Left colon (tissue), 2 donors: ENCODE measurements at regions of chr15 and their contacts with region 1.

Region 1: DNA sequence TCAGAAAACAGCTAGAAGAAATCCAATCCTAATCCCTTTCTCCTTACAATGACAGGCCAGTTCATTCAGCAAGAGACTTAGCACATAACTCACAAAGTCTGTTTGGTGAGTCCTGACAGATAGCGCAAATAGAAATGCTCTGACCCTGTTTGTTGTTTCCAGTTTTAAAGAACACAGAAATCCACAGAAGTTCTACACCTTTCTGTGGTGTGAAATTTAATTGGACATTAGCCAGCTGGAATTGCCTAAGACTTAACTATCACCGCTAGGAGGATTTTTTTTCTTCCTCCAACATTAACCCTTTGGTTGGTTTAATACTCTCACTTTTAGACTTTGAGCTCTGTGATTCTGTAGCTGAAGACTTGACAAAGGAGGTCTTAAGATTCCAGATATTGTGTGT is 30.8 kb downstream of the HDC start:
- DNase-seq: no peak
- ATAC-seq: peak; percentile 17

Region 2: DNA sequence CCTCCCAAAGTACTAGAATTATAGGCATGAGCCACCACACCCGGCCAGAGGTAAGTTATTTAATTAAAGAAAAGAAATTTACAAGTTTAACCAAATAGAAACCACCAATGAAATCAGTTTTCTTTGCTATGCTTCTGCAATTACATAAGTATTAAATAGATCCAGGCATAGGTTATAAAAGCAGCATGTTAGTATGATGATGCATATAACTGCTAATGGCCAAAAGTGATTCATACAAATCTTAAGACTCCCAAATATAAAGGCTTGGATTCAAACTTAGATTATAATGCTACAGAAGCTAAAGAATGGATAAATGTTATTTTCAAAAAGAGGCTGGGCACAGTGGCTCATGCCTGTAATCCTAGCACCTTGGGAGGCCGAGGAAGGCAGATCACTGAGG is 63.6 kb after region 1 on chr15:
- intact Hi-C with region 1: loop called in 1 of 2 experiments (anchors 10 kb)
- DNase-seq: no peak
- ATAC-seq: no peak